ENCODE measurements at regions of chr5 and their contacts with region 1.

Region 1: GRCh38 chr5:135560858-135561257 is 17.9 kb downstream of the CXCL14 start:
- DNase-seq: peak; percentile 84
- ATAC-seq: peak; percentile 74

Region 2: DNA sequence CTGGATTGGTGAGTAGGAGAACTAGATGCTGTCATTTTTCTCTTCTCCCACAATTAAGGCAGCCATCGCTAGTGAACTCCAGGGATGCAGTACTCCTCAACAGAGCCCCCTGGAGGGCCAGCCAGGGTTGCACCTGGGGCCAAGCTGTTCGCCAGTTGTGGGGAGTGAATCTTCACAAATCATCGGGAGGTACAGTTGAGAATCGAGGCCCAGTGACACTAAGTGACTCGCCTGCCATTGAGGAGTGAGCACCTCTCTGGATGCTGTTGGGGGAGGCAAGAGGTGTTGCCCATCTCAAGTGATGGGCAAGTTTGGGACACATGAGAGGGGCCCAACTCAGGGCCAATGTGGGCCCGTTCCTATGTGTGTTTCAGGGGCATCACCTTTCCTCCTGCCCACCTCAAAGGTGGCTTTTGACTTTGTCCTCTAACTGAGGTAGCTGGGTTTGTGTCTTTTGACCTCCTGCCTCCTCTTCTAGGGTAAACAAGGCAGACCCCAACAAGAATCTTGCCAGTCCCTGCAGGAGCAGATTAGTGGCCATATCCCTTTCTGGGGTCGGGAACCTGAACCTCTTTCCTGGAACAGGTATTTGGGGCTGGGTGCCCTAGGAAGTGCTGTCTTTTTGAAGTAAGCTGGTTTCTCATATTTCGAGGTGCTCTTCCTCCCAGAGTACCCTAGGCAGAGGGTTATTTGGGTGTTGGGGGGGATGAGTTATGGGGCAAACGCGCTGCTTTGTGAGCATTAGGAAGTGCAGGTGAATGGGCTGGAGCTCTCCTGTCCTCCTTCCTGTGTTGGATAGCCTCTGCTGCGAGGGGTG is 343.0 kb before region 1 on chr5:
- intact Hi-C with region 1: no loop called
- DNase-seq: no peak
- ATAC-seq: no peak

Region 3: DNA sequence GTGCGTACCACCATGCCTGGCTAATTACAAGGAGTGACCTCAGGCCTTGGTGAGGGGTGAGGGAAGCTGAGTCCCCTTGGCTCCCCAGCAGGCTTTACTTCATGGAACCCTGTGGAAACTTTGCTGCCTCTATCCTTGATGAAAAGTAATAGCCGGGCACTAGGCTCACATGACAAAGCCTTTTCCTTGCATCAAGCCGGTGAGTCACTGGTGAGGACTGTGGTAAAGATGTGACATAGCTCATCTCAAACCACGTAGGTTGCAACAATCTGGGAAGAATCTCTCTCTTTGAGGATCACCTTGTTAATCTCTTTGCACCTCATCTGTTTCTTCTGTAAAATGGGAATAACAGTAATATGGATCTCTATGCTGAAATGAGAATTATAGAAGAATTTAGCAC is 157.3 kb after region 1 on chr5:
- intact Hi-C with region 1: loop called (anchors 10 kb)
- DNase-seq: no peak
- ATAC-seq: no peak

Region 4: DNA sequence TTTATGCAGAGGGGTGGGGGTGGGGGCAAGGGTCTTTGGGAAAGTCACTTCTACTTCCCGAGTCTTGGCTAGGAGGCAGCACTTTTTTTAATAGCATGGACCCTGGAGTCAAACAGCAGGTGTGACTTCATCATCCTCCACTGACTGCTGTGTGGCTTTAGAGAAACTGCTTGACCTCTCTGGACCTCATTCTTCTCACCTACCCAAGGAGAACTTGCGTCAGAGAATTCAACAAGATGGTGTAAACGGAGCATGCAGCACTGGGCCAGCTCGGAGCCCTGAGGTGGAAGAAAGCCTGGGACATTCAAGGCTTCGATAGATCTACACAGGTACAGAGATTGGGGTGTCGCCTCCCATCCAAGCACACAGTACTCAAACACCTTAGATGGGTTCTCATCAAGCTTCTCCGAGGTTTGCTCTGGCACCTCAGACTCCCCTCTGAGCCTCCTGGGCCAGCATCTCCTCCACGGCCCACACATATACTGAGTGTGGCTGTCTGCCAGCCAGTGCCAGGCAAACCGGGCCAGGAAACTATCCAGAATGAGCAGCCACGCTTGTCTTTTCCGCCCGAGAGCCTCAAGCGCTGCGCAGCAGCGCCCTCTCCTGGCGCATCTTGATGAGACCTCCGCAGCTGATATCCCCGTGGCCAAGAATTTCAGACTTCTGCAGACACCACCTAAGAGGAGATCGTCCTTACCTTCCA is 269.0 kb after region 1 on chr5:
- intact Hi-C with region 1: loop called (anchors 1 kb)
- DNase-seq: no peak
- ATAC-seq: peak; percentile 47

Region 5: DNA sequence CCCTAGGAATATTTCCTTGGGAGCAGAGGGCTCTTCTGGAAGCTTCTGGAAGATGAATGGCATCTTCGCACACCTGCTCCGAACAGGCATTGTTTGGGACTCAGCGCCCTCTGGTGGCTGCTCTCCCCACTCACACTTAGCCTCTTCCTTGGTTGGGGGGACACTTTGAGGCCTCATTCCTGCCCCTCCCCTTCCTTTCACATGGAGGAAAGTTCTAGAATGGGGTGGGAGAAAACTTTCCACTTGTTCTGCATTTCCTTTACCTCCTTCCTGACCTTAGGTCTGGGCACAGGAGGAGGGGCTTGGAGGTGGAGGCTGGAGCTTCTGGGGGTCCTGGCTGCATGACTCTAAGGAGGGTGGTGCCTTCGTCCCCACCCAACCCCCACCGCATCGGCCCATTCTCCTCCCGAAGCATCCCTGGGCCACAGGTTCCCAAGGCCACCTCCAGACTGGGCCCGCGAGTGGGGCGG is 651.4 kb after region 1 on chr5:
- intact Hi-C with region 1: loop called (anchors 10 kb)
- DNase-seq: no peak
- ATAC-seq: no peak

Measured in Right ventricle myocardium inferior (tissue), 1 donor.